ENCODE measurements at regions of chr2 and their contacts with region 1.

Region 1: GRCh38 chr2:181223234-181223633 is 234.0 kb upstream of the ITGA4 start:
- DNase-seq: no peak
- H3K4me3 Mint-ChIP-seq: peak overlapping the region; percentile 43
- H3K27ac Mint-ChIP-seq: peak overlapping the region; percentile 98
- H3K4me1 Mint-ChIP-seq: peaks cover 24% of the 10 kb centered on the region
- H3K27me3 Mint-ChIP-seq: no peaks in the 10 kb centered on the region

Region 2: DNA sequence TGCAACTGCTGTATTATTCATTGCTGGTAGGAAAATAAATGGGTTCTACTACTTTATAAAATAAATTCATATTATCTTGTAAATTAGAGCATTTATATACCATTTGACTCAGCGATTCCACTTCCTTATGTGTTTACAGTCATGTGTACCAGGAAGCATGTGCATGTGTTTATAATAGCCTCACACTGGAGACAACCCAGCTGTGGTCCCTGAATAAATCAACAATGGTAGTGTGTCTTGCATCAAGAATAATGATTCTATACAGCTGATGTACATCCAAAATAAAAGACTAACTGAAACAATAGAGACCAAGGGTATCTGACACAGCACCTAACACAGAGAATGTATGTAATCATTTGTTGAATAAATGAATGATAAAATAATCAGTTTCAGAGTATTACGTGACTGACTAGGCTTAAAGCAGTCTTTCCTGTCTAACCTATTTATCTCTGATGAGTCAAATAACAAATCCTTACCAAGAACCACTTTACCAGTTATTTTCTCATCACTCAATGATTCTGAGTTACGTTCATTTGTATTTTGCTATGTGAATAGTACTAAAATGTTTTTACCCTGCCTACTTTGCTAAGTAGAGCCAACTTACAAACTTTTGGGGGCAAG is 26.0 kb before region 1 on chr2:
- intact Hi-C with region 1: loop called (anchors 2 kb)
- DNase-seq: no peak
- H3K4me3 Mint-ChIP-seq: peak overlapping the region; percentile 37
- H3K27ac Mint-ChIP-seq: peak overlapping the region; percentile 80
- H3K4me1 Mint-ChIP-seq: peaks cover 47% of the 10 kb centered on the region
- H3K27me3 Mint-ChIP-seq: no peaks in the 10 kb centered on the region

Region 3: GRCh38 chr2:181281206-181281832 is 58.1 kb after region 1 on chr2:
- intact Hi-C with region 1: no loop called
- DNase-seq: no peak
- H3K4me3 Mint-ChIP-seq: peak overlapping the region; percentile 6
- H3K27ac Mint-ChIP-seq: peak overlapping the region; percentile 58
- H3K4me1 Mint-ChIP-seq: peaks cover 37% of the 10 kb centered on the region
- H3K27me3 Mint-ChIP-seq: no peaks in the 10 kb centered on the region

Region 4: GRCh38 chr2:181305301-181306123 is 82.3 kb after region 1 on chr2:
- intact Hi-C with region 1: loop called (anchors 2 kb)
- DNase-seq: peak; percentile 70
- H3K4me3 Mint-ChIP-seq: peak overlapping the region; percentile 70
- H3K27ac Mint-ChIP-seq: peak overlapping the region; percentile 93
- H3K4me1 Mint-ChIP-seq: peaks cover 74% of the 10 kb centered on the region
- H3K27me3 Mint-ChIP-seq: no peaks in the 10 kb centered on the region